ENCODE measurements at regions of chr5 and their contacts with region 1.

Region 1: DNA sequence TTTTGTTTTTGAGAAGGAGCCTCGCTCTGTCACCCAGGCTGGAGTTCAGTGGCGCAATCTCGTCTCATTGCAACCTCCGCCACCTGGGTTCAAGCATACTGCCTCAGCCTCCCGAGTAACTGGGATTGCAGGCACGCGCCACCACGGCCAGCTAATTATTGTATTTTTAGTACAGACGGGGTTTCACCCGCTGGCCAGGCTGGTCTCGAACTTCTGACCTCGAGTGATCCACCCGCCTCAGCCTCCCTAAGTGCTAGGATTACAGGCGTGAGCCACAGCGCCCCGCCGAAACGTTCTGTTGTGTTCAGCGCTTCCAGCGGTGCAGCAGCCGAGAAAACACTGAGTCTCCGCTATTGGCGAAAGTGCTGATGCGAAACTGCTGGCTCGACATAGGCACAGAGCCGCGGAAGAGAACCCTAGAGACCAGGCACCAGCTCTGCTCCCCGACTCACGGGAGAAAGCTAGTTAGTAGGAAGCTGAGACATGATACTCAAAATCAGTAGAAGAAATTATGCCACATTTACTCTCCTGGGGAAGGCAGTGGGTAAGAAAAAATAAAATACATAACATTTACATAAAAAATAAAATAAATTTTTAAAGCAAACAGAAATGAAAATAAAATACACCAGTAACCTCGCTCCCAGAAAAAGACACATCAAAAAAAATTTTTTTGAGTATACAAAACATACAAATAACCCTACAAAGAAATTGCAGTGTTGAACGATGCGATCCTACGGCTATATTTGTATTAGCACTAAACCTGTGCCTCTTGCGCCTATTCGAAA is 31.6 kb downstream of the ANXA2R start:
- DNase-seq: peak in 1 of 2 experiments; percentile 90
- H3K4me3 ChIP-seq: peak overlapping the region; percentile 51 to 69 (median 59)
- H3K27ac ChIP-seq: no peak overlapping the region
- H3K4me1 ChIP-seq: peaks cover 0 to 3% (median 0%) of the 10 kb centered on the region in 4 experiments; a peak in 2 of 7 replicates
- H3K27me3 ChIP-seq: peaks cover 31 to 54% (median 46%) of the 10 kb centered on the region in 4 experiments
- CTCF ChIP-seq: peak in 2 of 3 experiments; percentile 3 to 22; a peak in 2 of 4 replicates
- EP300 ChIP-seq: peak in 1 of 2 experiments; percentile 87; a peak in 1 of 3 replicates
- POLR2A ChIP-seq: no peak
- RAD21 ChIP-seq: no peak

Region 2: DNA sequence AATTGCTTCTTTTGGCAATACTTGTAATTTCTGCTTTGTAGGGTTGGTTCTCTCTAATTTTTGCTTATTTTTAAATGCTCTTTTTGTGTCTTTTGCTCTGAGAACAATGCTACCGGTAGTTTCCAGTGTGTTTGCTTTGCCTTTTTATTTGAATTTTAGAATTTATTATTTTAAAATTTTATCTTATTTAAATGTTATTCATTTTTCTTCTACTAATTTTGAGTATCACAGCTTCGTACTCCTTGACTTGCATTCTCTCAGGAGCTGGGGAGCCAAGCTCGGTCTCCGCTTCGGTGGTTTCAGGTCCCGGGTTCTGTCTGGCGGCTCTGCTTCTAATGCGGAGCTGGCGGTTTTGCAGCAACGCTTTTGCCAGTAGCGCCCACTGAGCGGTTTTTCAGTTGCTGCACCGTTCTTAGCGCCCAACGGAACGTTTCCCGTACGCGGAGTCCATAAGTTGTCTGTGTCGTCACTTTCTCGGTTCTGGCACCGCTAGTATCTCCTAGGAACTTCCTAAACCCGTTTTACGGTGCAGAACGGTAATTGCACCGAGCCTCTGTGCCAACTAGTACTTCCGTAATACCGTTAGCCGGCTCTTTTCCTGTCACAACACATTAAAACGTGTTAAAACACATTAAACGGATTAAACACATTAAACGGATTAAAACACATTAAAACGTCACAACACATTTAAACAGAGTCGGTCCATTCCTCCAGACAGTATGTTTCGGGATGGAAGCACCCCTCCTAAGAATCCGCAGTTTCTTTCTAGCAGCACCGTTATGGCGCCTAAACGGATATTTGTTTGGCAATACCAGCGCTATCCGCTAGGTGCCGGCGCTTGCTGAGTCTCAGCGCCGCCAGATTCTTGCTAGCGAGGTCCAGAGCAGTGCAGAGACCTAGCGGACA is 14.1 kb before region 1 on chr5:
- CTCF ChIA-PET with region 1: interaction called, 15 read pairs
- POLR2A ChIA-PET with region 1: interaction called, 6 read pairs
- DNase-seq: peak in 1 of 2 experiments; percentile 90
- H3K4me3 ChIP-seq: peak overlapping the region in 3 of 4 experiments; percentile 8 to 32 (median 16); a peak in 3 of 8 replicates
- H3K27ac ChIP-seq: no peak overlapping the region
- H3K4me1 ChIP-seq: peaks cover 3 to 9% (median 4%) of the 10 kb centered on the region in 4 experiments
- H3K27me3 ChIP-seq: peaks cover 78 to 100% (median 93%) of the 10 kb centered on the region in 4 experiments
- CTCF ChIP-seq: peak; percentile 69 to 96 (median 83)
- EP300 ChIP-seq: no peak
- POLR2A ChIP-seq: no peak
- RAD21 ChIP-seq: peak; percentile 52 to 71

Region 3: DNA sequence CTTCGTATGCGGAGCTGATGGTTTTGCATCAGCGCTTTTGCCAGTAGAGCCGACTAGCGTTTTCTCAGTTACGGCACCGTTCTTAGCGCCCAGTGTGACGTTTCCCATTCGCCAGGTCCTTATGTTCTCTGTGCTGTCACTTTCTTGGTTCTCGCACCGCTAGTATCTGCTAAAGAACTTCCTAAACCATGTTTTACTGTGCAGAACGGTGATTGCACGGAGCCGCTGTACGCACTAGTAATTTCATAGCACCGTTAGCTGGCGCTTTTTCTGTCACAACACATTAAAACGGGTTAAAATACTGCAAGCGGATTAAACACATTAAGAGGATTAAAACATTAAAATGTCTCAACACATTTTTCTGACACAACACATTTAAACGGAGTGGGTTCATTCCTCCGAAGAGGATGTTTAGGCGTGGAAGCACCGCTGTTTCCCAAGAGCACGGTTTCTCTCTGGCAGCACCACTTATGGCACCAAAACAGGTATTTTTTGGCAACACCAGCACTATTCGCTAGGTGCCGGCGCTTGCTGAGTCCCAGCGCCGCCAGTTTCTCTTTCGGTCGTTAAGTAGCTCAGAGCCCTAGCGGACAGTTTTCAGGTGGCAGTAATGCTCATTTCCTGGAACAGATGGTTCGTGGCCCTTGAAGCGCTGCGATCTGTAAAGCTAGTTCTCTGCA is 11.2 kb after region 1 on chr5:
- CTCF ChIA-PET with region 1: interaction called, 10 read pairs
- POLR2A ChIA-PET with region 1: interaction called, 5 read pairs
- DNase-seq: no peak
- H3K4me3 ChIP-seq: peak overlapping the region in 1 of 4 experiments; percentile 16; a peak in 1 of 8 replicates
- H3K27ac ChIP-seq: no peak overlapping the region
- H3K4me1 ChIP-seq: peaks cover 4 to 23% (median 12%) of the 10 kb centered on the region in 4 experiments; a peak in 6 of 7 replicates
- H3K27me3 ChIP-seq: peaks cover 49 to 97% (median 86%) of the 10 kb centered on the region in 4 experiments
- CTCF ChIP-seq: peak; percentile 37 to 71 (median 53)
- EP300 ChIP-seq: no peak
- POLR2A ChIP-seq: no peak
- RAD21 ChIP-seq: peak in 1 of 2 experiments; percentile 29; a peak in 2 of 4 replicates